Gastrocnemius medialis (tissue), 4 donors: ENCODE measurements at regions of chr9 and their contacts with region 1.

Region 1: GRCh38 chr9:18379073-18379811 is 94.7 kb upstream of the ADAMTSL1 start:
- DNase-seq: no peak
- ATAC-seq: no peak
- H3K4me3 ChIP-seq: no peak overlapping the region
- H3K27ac ChIP-seq: no peak overlapping the region
- H3K4me1 ChIP-seq: no peaks in the 10 kb centered on the region
- H3K27me3 ChIP-seq: no peaks in the 10 kb centered on the region
- CTCF ChIP-seq: no peak
- POLR2A ChIP-seq: no peak

Region 2: DNA sequence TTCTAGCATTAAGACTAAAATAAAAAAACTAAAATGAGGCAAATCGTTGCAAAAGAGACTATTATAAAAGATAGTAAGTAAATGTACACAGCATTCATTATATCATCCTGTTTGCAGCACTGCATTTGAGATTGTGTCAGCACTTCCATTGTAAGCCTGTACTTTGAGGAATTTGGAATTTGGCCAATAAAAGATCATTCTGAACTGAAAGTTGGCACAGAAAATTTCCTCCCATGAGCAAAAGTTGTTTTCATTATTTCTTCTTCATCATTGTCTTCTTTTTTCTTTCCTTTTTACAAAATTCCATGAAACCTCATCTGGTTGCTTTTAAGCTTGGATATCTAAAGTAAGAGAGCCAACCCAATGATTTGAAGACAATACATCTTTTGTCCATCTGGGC is 104.5 kb before region 1 on chr9:
- in situ Hi-C with region 1: no loop called
- intact Hi-C with region 1: no loop called
- DNase-seq: no peak
- ATAC-seq: no peak
- H3K4me3 ChIP-seq: no peak overlapping the region
- H3K27ac ChIP-seq: no peak overlapping the region
- H3K4me1 ChIP-seq: no peaks in the 10 kb centered on the region
- H3K27me3 ChIP-seq: no peaks in the 10 kb centered on the region
- CTCF ChIP-seq: no peak
- POLR2A ChIP-seq: no peak

Region 3: GRCh38 chr9:18398038-18398437 is 18.8 kb after region 1 on chr9:
- in situ Hi-C with region 1: no loop called
- intact Hi-C with region 1: loop called (anchors 1 kb)
- DNase-seq: no peak
- ATAC-seq: no peak
- H3K4me3 ChIP-seq: no peak overlapping the region
- H3K27ac ChIP-seq: no peak overlapping the region
- H3K4me1 ChIP-seq: peaks cover 0 to 6% of the 10 kb centered on the region in 2 donors
- H3K27me3 ChIP-seq: no peaks in the 10 kb centered on the region
- CTCF ChIP-seq: no peak
- POLR2A ChIP-seq: no peak